Caco-2 (cell line): ENCODE measurements at regions of chr3 and their contacts with region 1.

Region 1: GRCh38 chr3:127535901-127536829 is 54.4 kb downstream of the TPRA1 start:
- DNase-seq: no peak
- H3K4me3 ChIP-seq: no peak overlapping the region
- H3K4me3 Mint-ChIP-seq: no peak overlapping the region
- H3K27ac Mint-ChIP-seq: no peak overlapping the region
- H3K4me1 ChIP-seq: no peaks in the 10 kb centered on the region
- H3K4me1 Mint-ChIP-seq: no peaks in the 10 kb centered on the region
- H3K27me3 ChIP-seq: no peaks in the 10 kb centered on the region; the same call in 1 of the 2 replicates
- H3K27me3 Mint-ChIP-seq: peaks cover 24% of the 10 kb centered on the region
- CTCF ChIP-seq: no peak

Region 2: GRCh38 chr3:127406309-127407025 is 129.7 kb before region 1 on chr3:
- CTCF ChIA-PET with region 1: no interaction called
- POLR2A ChIA-PET with region 1: no interaction called
- intact Hi-C with region 1: no loop called
- DNase-seq: peak in 1 of 2 experiments; percentile 35
- H3K4me3 ChIP-seq: no peak overlapping the region
- H3K4me3 Mint-ChIP-seq: no peak overlapping the region
- H3K27ac Mint-ChIP-seq: no peak overlapping the region
- H3K4me1 ChIP-seq: peaks cover 11% of the 10 kb centered on the region
- H3K4me1 Mint-ChIP-seq: no peaks in the 10 kb centered on the region
- H3K27me3 ChIP-seq: no peaks in the 10 kb centered on the region
- H3K27me3 Mint-ChIP-seq: peaks cover 4% of the 10 kb centered on the region
- CTCF ChIP-seq: peak; percentile 32 to 44

Region 3: DNA sequence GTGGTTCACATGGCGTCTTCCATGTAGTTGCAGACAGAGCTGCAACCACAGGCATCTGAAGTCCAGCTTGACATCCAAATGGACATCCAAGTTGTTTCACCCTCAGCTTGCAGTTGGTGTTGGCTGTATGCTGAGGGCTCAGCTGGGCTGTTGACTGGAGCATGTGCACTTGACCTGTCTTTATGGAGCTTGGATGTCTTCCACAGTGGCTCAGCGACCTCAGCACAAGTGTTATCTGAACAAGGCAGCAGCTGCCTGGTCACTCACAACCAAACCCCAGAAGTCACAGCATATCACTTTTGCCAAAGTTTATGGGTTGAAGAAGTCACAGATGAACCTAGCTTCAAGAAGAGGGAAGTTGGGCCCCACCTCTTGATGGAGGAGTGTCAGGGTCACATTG is 38.5 kb before region 1 on chr3:
- CTCF ChIA-PET with region 1: interaction called, 10 read pairs
- POLR2A ChIA-PET with region 1: no interaction called
- intact Hi-C with region 1: no loop called
- DNase-seq: no peak
- H3K4me3 ChIP-seq: no peak overlapping the region
- H3K4me3 Mint-ChIP-seq: no peak overlapping the region
- H3K27ac Mint-ChIP-seq: no peak overlapping the region
- H3K4me1 ChIP-seq: no peaks in the 10 kb centered on the region
- H3K4me1 Mint-ChIP-seq: no peaks in the 10 kb centered on the region
- H3K27me3 ChIP-seq: no peaks in the 10 kb centered on the region
- H3K27me3 Mint-ChIP-seq: peaks cover 17% of the 10 kb centered on the region
- CTCF ChIP-seq: no peak

Region 4: GRCh38 chr3:127525373-127525772 is 10.8 kb before region 1 on chr3:
- CTCF ChIA-PET with region 1: no interaction called
- POLR2A ChIA-PET with region 1: no interaction called
- intact Hi-C with region 1: no loop called
- DNase-seq: no peak
- H3K4me3 ChIP-seq: no peak overlapping the region
- H3K4me3 Mint-ChIP-seq: no peak overlapping the region
- H3K27ac Mint-ChIP-seq: no peak overlapping the region
- H3K4me1 ChIP-seq: no peaks in the 10 kb centered on the region
- H3K4me1 Mint-ChIP-seq: no peaks in the 10 kb centered on the region
- H3K27me3 ChIP-seq: no peaks in the 10 kb centered on the region
- H3K27me3 Mint-ChIP-seq: peaks cover 23% of the 10 kb centered on the region
- CTCF ChIP-seq: no peak